ENCODE measurements at regions of chr10 and their contacts with region 1.

Region 1: DNA sequence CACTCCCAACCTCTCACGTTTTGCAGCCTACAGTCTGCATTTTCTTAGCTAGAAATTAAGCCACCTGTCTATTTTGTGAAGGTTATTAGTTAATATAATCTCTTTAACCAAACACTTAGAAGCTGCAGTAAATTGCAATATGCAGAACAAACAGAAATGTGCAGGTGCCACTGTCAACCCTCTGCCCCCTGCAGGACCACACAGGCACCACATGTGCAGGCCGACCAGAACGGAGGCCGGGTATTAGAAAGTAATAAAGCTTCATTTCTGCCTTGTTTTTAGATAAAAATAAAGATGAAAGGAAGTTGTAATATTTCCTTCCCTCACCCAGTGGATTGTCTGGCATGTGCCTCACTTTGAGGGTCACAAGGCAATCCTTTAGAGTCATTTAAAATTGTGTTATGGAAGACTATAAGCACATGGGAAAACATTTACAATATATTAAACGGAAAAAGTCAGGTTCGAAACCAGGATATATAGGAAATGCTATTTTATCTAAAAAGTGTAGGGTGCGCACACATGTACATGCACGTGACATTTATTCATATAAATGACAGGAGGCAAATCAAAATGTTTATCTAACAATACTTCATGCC is 158.2 kb downstream of the ARHGAP12 start:
- DNase-seq: peak; percentile 73
- ATAC-seq: peak; percentile 87
- H3K4me3 Mint-ChIP-seq: no peak overlapping the region
- H3K27ac Mint-ChIP-seq: no peak overlapping the region
- H3K4me1 Mint-ChIP-seq: peaks cover 5% of the 10 kb centered on the region
- H3K27me3 Mint-ChIP-seq: no peaks in the 10 kb centered on the region
- CTCF ChIP-seq: peak; percentile 87

Region 2: GRCh38 chr10:31707093-31708039 is 63.0 kb before region 1 on chr10:
- CTCF ChIA-PET with region 1: interaction called, 13 read pairs
- POLR2A ChIA-PET with region 1: no interaction called
- intact Hi-C with region 1: no loop called
- DNase-seq: peak; percentile 77
- ATAC-seq: peak; percentile 94
- H3K4me3 Mint-ChIP-seq: peak overlapping the region; percentile 18
- H3K27ac Mint-ChIP-seq: peak overlapping the region; percentile 84
- H3K4me1 Mint-ChIP-seq: peaks cover 19% of the 10 kb centered on the region
- H3K27me3 Mint-ChIP-seq: no peaks in the 10 kb centered on the region
- CTCF ChIP-seq: no peak

Region 3: DNA sequence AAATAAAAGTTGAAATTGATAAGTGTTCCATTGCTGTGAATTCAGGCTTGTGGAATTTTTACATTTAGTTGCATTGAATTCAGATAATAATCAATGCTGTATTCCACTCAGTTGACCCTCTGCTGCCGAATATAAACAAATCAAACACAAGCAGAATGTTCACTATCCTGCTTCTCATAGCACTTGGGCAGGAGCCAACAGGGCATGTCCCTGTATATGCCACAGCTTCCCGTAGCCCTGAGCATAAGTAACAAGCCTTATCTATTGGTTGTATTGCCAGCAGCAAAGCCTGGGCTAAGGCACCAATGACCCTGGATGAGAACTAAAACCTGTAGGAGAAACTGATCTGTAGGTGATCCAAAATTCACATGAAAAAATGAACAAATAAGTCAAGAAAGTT is 12.3 kb after region 1 on chr10:
- CTCF ChIA-PET with region 1: interaction called, 13 read pairs
- POLR2A ChIA-PET with region 1: no interaction called
- intact Hi-C with region 1: no loop called
- DNase-seq: no peak
- ATAC-seq: no peak
- H3K4me3 Mint-ChIP-seq: no peak overlapping the region
- H3K27ac Mint-ChIP-seq: no peak overlapping the region
- H3K4me1 Mint-ChIP-seq: no peaks in the 10 kb centered on the region
- H3K27me3 Mint-ChIP-seq: no peaks in the 10 kb centered on the region
- CTCF ChIP-seq: no peak

Region 4: DNA sequence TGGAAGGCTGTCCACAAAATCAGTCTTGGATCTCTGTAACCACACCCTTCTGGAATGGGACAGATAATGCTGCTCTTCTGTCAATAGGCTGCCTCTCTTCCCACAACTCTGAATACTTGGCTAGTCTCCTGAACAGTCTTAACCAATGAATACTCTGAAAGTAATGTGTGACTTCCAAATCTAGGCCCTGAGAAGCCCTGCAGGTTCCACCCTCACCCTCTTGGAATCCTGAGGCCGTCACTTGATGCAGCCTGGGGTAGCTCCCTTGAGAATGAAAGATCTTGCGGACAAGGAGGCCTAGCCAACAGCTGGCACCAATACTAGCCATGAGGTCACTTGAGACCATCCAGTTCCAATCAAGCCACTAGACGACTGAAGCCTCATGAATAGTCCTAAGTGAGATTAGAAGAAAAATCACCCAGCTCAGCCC is 49.0 kb after region 1 on chr10:
- CTCF ChIA-PET with region 1: no interaction called
- POLR2A ChIA-PET with region 1: no interaction called
- intact Hi-C with region 1: no loop called
- DNase-seq: no peak
- ATAC-seq: no peak
- H3K4me3 Mint-ChIP-seq: no peak overlapping the region
- H3K27ac Mint-ChIP-seq: no peak overlapping the region
- H3K4me1 Mint-ChIP-seq: no peaks in the 10 kb centered on the region
- H3K27me3 Mint-ChIP-seq: no peaks in the 10 kb centered on the region
- CTCF ChIP-seq: no peak

Measured in activated CD8-positive, alpha-beta T cell treated with anti-CD3 and anti-CD28 coated beads for 36 hours (primary cell).